ENCODE measurements at regions of chr3 and their contacts with region 1.

Region 1: DNA sequence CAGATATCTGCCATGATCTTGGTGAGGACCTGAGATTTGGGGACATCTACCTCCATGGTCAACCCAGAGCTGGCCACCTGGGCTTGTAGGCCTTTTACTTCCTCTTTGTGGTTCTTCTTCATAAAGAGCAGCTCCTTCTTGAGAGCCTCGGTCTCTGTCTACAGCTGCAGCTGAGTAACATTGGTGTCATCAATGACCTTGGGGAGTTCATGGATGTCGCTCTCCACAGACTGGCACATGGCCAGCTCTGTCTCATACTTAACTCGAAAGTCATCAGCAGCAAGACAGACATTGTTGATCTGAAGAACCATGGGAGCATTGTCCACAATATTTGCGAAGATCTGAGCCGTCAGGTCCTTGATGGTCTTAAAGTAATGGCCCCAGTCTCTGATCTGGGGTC is 15.7 kb upstream of the RASA2 start:
- DNase-seq: no peak
- ATAC-seq: no peak
- H3K4me3 ChIP-seq: no peak overlapping the region
- H3K27ac ChIP-seq: no peak overlapping the region
- H3K4me1 ChIP-seq: no peaks in the 10 kb centered on the region
- CTCF ChIP-seq: no peak
- EP300 ChIP-seq: no peak
- POLR2A ChIP-seq: no peak
- RAD21 ChIP-seq: no peak

Region 2: DNA sequence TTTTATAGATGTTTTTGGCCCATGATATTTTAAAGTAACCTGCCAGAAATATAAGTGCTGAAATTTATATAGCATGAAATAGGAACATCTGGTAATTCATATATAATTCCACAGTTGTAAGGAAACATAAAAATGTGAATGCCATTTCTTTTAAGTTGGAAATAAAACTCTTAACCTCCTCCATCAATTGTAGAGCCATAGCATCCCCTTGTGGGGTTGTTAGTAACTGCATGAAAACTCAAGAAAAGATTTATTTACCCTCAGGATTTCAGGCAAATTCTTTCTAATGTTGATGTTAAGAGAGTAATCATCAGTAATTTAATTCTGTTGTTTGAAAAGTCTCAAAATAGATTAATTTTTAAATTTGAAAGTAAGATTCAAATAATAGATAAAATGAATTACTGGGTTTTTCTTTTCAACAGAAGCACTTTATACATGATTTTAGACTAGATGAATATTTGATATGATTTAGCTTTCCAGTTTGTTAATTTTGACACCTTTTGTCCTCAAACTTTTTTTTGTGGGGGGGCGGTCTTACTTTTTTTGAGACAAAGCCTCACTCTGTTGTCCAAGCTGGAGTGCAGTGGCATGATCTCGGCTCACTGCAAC is 90.4 kb after region 1 on chr3:
- CTCF ChIA-PET with region 1: interaction called, 17 read pairs
- POLR2A ChIA-PET with region 1: no interaction called
- DNase-seq: peak in 1 of 2 experiments; percentile 81
- ATAC-seq: peak in 1 of 2 experiments; percentile 55; a peak in 2 of 6 replicates
- H3K4me3 ChIP-seq: no peak overlapping the region
- H3K27ac ChIP-seq: peak overlapping the region in 1 of 2 experiments; percentile 39; a peak in 1 of 6 replicates
- H3K4me1 ChIP-seq: 0 out of 3 replicates have a peak, but pooled peaks cover 3% of the 10 kb centered on the region
- CTCF ChIP-seq: peak; percentile 98
- EP300 ChIP-seq: no peak
- POLR2A ChIP-seq: no peak
- RAD21 ChIP-seq: peak; percentile 98 to 99

Measured in A549 (cell line).